Activated CD8-positive, alpha-beta memory T cell treated with anti-CD3 and anti-CD28 coated beads, Interleukin-2, amount 10 ng/mL, durations not matched to agents 7 days and 5 days (primary cell): ENCODE measurements at regions of chr22 and their contacts with region 1.

Region 1: DNA sequence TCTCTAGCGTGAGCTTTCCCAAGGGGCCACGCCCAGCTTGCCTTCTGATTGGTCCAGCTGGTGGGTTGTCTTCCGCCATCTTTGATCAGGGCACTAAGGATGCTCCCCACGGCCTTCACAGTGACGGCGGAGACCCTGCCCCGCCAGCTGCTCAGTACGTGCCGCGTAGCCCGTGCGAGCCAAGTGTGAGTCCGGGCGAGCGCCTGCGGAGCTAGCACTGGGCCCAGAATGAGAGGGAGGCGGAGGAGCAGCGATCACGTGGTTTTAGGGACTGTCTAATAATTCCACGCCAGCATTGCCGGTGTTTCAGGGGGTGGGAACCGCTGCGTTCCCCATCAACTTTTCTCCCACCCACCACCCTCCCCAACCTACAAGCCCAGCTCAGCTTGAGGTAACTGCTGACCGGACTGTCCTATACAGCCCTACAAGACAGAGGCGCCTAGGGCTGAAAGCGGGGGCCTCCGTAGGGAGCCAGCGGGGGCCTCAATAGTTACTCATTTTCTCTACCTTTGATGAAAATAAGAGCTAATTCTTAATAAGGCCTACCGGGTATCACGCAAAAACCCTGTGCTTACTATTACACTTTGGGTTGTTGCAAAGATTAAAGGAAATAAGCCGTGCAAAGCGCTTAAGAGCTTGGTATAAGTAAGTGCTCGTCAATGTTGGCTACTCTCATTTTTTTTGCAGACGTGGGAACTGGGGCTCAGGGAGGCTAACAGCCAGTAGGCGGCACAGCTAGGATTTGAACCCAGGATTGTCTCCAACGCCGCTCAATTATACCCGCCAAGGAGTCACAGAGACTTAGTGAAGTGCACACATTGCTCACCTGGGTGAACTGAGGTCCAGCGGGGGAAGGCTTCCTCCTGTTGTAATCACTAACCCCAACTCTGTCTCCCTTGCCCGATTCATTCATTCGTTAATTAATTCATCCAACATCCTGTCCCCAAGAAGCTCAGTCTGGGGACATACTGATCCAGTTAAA is 1.3 kb upstream of the MTFP1 start:
- DNase-seq: peak; percentile 100
- ATAC-seq: peak; percentile 91
- H3K4me3 Mint-ChIP-seq: peak overlapping the region; percentile 96
- H3K27ac Mint-ChIP-seq: peak overlapping the region; percentile 96
- H3K4me1 Mint-ChIP-seq: peaks cover 54% of the 10 kb centered on the region
- H3K27me3 Mint-ChIP-seq: no peaks in the 10 kb centered on the region

Region 2: DNA sequence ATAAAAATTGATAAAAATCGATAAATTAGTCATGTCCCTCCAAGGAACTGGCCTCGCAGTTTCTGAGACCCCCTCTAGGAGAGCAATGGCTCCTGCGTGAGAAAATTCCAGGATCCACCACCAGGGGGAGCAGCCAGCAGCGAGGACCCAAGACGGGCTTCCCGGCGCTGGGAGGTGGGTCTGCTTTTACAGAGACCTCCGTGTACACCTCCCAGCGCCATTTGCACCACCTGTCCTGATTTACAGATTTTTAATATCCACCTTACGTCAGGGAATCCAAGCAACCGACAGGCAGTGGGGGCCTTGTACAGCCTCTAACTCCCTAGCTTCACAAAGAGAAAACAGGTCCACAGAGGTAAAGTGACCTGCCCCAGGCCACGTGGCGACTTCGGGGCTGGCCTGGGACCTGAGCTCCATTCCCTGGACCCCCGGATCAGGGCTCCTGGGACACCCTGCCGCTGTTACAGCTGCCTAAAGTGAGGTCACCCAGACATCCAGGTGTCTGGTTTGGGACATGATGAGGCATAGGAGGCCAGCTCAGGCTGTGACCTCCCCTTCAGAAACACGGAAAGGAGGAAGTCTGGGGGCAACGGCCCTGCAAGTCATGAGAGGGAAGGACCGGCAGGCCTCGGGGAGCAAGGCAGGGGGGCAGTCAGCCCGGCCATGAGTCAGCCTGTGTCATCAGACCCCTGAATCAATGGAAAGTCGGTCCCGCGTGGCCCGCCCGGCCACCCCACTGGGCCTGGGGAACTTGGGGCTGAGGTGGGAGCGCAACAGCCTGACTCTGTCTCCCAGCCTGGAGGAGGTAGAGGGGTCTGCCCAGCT is 161.1 kb before region 1 on chr22:
- CTCF ChIA-PET with region 1: interaction called, 10 read pairs
- DNase-seq: peak; percentile 86
- ATAC-seq: no peak
- H3K4me3 Mint-ChIP-seq: peak overlapping the region; percentile 98
- H3K27ac Mint-ChIP-seq: peak overlapping the region; percentile 74
- H3K4me1 Mint-ChIP-seq: peaks cover 59% of the 10 kb centered on the region
- H3K27me3 Mint-ChIP-seq: no peaks in the 10 kb centered on the region

Region 3: DNA sequence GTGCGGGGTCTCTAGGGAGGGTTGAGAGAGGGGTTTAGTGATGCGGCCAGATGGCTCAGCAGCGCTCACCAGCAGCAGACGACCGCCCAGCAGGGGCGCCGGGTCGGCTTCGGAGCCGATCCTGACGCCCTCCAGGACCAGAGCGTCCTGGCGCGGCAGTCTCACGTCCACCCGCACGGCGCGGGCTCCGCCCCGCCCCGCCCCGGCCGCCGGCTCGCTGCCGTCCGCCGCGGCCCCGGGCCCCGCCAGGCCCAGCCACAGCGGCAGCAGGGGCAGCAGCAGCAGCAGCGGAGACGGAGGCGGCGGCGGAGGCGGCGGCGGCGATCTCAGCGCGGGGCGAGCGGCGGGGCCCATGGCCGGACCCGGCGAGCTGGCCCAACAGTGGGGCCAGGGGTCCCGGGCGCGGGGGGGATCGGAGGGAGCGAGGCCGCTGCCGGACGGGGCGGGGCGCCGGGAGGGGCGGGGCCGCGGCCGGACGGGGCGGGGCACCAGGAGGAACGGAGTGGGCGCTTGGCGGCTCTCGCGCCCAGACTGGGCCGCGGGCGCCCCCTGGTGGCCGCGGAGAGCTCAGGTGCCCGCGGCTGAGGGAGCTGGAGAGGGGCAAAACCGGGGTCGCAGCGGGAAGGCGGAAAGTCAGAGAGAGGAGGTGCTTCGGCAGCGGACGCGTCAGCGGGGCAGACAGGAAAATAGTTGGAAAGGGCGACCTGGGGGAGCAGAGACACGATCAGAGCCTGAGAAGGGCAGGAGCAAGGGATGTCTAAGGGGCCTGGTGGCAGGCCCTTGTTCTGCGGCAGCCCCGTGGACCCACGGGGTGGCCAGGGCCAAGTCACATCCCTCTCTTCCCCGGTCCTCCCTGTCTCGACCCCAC is 37.1 kb before region 1 on chr22 and contains the start of gene RNF215:
- CTCF ChIA-PET with region 1: interaction called, 79 read pairs
- DNase-seq: peak; percentile 82
- ATAC-seq: peak; percentile 91
- H3K4me3 Mint-ChIP-seq: peak within 1 kb of the TSS; percentile 76
- H3K27ac Mint-ChIP-seq: peak within 1 kb of the TSS; percentile 78
- H3K4me1 Mint-ChIP-seq: peaks cover 22% of the 10 kb centered on the region
- H3K27me3 Mint-ChIP-seq: no peaks in the 10 kb centered on the region
- total RNA-seq, gene RNF215: 8.5 to 10.5 TPM

Region 4: DNA sequence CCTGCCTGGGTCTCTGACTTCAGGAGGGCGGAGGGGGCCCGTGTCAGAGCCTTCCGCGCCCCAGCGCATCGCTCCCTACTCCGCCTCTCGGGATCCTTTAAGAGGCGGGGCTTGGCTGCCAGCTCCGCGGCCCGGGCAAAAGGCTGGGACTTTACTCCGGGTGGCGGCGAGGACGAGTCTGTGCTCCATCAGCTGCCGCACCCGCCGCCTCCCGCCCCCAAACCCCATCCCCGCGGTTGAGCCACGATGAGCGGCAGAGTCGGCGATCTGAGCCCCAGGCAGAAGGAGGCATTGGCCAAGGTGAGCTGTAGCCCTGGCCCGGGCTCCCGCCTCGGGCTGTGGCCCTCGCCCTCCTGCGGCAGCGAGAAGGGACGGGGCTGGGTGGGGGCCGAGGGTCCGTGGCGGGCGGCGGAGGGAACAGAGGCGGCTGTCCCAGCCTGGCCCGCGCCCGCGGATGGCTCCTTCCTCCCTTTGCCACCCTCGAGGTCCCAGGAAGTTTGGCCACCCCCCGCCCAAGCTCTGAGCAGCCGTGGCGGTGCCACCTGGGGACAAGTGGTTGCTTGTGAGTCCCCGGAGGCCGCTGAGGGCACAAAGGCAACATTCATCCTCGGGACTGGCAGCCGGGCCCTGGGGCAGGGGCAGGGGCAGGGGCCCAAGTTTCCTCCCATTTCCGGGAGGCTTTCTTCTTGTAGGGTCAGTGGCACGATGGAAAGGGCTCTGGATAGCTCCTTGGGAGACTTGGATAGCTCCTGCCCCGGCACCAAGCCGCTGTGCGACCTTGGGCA is 27.2 kb before region 1 on chr22 and contains the start of gene SEC14L2:
- CTCF ChIA-PET with region 1: interaction called, 79 read pairs
- DNase-seq: peak; percentile 55
- ATAC-seq: peak; percentile 81
- H3K4me3 Mint-ChIP-seq: peak within 1 kb of the TSS; percentile 73
- H3K27ac Mint-ChIP-seq: no peak within 1 kb of the TSS
- H3K4me1 Mint-ChIP-seq: peaks cover 32% of the 10 kb centered on the region
- H3K27me3 Mint-ChIP-seq: peaks cover 27% of the 10 kb centered on the region
- total RNA-seq, gene SEC14L2: 2.2 to 4.8 TPM

Region 5: GRCh38 chr22:30413745-30414524 is 10.3 kb before region 1 on chr22:
- CTCF ChIA-PET with region 1: interaction called, 17 read pairs
- DNase-seq: no peak
- ATAC-seq: no peak
- H3K4me3 Mint-ChIP-seq: no peak overlapping the region
- H3K27ac Mint-ChIP-seq: no peak overlapping the region
- H3K4me1 Mint-ChIP-seq: peaks cover 13% of the 10 kb centered on the region
- H3K27me3 Mint-ChIP-seq: no peaks in the 10 kb centered on the region

Region 6: GRCh38 chr22:30435674-30436126 is 11.4 kb after region 1 on chr22:
- CTCF ChIA-PET with region 1: interaction called, 71 read pairs
- DNase-seq: peak; percentile 93
- ATAC-seq: peak; percentile 93
- H3K4me3 Mint-ChIP-seq: peak overlapping the region; percentile 79
- H3K27ac Mint-ChIP-seq: peak overlapping the region; percentile 92
- H3K4me1 Mint-ChIP-seq: peaks cover 24% of the 10 kb centered on the region
- H3K27me3 Mint-ChIP-seq: peaks cover 14% of the 10 kb centered on the region

Region 7: GRCh38 chr22:30444632-30445437 is 20.6 kb after region 1 on chr22:
- CTCF ChIA-PET with region 1: interaction called, 71 read pairs
- DNase-seq: peak; percentile 78
- ATAC-seq: peak; percentile 54
- H3K4me3 Mint-ChIP-seq: no peak overlapping the region
- H3K27ac Mint-ChIP-seq: peak overlapping the region; percentile 31
- H3K4me1 Mint-ChIP-seq: peaks cover 32% of the 10 kb centered on the region
- H3K27me3 Mint-ChIP-seq: peaks cover 43% of the 10 kb centered on the region